WTC11 (cell line): ENCODE measurements at regions of chr10 and their contacts with region 1.

Region 1: GRCh38 chr10:70267161-70267933 is 16.5 kb downstream of the NPFFR1 start:
- DNase-seq: peak; percentile 79
- ATAC-seq: peak; percentile 56
- H3K4me3 Mint-ChIP-seq: no peak overlapping the region
- H3K27ac Mint-ChIP-seq: no peak overlapping the region
- H3K4me1 Mint-ChIP-seq: peaks cover 2% of the 10 kb centered on the region
- H3K27me3 Mint-ChIP-seq: peaks cover 9% of the 10 kb centered on the region
- CTCF ChIP-seq: peak; percentile 52

Region 2: GRCh38 chr10:70093335-70093944 is 173.9 kb before region 1 on chr10:
- CTCF ChIA-PET with region 1: no interaction called
- POLR2A ChIA-PET with region 1: no interaction called
- DNase-seq: no peak
- ATAC-seq: no peak
- H3K4me3 Mint-ChIP-seq: no peak overlapping the region
- H3K27ac Mint-ChIP-seq: no peak overlapping the region
- H3K4me1 Mint-ChIP-seq: no peaks in the 10 kb centered on the region
- H3K27me3 Mint-ChIP-seq: no peaks in the 10 kb centered on the region
- CTCF ChIP-seq: no peak

Region 3: DNA sequence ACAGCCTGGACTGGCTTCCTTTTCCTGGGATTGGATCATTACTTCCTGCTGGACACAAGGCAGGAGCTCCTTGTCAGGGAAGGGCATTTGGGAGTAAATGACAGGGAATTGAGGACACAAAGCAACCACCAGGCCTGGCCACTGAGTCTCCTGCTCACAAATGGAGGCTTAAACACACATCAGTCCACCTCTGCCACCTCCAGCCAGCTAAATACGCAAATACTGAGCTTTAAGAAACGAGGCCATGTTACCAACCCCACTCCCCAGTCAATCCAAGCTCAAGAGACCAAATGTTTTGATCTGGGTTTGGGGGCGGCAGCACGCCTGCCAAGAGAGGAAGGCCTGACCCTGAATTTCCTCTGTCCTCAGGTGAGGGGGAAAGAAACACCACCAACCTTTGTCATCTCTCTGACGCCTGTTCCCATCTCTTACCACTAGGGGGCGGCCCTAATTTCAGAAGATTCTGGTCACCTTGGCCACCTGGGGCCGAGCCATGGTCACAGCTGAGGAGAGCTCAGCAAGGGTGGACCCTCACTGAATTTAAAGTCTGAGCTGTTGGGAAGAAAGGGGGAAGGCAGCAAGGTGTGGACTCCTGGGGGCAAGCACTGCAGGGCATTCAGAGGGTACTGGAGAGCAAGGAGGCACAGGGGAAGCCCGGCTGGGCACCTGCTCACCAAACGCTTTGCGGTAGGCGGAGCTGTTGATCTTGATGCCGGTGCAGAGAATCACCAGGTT is 151.2 kb before region 1 on chr10:
- CTCF ChIA-PET with region 1: interaction called, 11 read pairs
- POLR2A ChIA-PET with region 1: no interaction called
- DNase-seq: peak; percentile 77
- ATAC-seq: peak; percentile 85
- H3K4me3 Mint-ChIP-seq: no peak overlapping the region
- H3K27ac Mint-ChIP-seq: 0 out of 2 replicates have a peak overlapping the region, but pooled peaks have one; percentile 30
- H3K4me1 Mint-ChIP-seq: peaks cover 10% of the 10 kb centered on the region; the same call in 1 of the 2 replicates
- H3K27me3 Mint-ChIP-seq: no peaks in the 10 kb centered on the region
- CTCF ChIP-seq: peak; percentile 92

Region 4: DNA sequence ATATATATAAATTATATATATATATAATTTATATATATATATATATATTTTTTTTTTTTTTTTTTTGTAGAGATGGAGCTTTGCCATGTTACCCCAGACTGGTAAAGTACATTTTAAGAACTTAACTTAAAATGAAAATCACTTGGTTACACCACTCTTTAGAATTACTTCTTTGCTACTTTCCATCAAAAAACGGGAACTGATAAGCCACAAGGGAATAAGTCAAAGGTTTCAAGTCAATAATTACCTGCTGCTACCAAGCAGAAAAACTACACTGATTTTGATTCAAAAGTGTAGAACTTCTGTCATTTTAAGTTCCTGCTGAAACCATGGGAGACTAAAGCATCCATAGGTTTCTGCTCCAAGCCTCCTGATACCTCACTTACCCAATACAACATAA is 46.3 kb before region 1 on chr10:
- CTCF ChIA-PET with region 1: interaction called, 58 read pairs
- POLR2A ChIA-PET with region 1: no interaction called
- DNase-seq: no peak
- ATAC-seq: no peak
- H3K4me3 Mint-ChIP-seq: no peak overlapping the region
- H3K27ac Mint-ChIP-seq: no peak overlapping the region
- H3K4me1 Mint-ChIP-seq: peaks cover 3% of the 10 kb centered on the region
- H3K27me3 Mint-ChIP-seq: no peaks in the 10 kb centered on the region
- CTCF ChIP-seq: no peak

Region 5: DNA sequence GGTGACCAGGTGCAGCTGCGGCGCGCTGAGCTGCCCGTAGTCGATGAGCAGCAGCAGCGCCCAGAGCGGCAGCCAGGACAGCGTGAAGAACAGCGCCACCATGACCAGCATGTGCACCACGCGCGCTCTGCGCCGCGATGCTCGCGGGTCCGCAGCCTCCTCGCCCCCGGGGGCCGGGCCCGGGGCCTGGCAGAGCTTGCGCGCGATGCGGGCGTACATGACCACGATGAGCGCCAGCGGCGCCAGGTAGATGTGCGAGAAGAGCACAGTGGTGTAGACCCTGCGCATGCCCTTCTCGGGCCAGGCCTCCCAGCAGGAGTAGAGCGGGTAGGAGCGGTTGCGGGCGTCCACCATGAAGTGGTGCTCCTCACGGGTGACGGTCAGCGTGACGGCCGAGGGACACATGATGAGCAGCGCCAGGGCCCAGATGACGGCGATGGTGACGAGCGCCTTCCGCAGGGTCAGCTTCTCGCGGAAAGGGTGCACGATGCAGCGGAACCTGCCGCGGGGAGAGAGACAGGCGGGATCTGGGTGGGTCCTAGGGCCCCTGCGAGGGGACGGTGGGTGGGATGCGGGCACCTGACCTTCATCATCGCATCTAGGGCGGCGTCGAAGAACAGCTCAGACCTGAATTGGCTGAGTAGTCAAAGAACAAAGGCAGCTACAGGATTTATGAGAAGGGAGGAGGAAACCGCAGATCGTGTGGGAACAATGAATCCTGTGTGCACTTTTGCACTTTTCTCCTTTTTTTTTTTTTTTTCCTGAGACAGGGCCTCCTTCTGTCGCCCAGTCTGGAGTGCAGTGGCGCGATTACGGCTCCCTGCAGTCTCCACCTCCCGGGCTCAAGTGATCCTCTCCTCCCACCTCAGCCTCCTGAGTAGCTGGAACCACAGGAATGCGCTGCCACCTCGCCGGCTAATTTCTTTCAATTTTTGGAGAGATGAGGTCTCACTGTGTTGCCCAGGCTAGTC is 11.7 kb before region 1 on chr10:
- CTCF ChIA-PET with region 1: interaction called, 19 read pairs
- POLR2A ChIA-PET with region 1: no interaction called
- DNase-seq: no peak
- ATAC-seq: no peak; the same call in 1 of the 2 replicates
- H3K4me3 Mint-ChIP-seq: no peak overlapping the region
- H3K27ac Mint-ChIP-seq: no peak overlapping the region
- H3K4me1 Mint-ChIP-seq: 0 out of 2 replicates have a peak, but pooled peaks cover 5% of the 10 kb centered on the region
- H3K27me3 Mint-ChIP-seq: peaks cover 6% of the 10 kb centered on the region; the same call in 1 of the 2 replicates
- CTCF ChIP-seq: no peak

Region 6: DNA sequence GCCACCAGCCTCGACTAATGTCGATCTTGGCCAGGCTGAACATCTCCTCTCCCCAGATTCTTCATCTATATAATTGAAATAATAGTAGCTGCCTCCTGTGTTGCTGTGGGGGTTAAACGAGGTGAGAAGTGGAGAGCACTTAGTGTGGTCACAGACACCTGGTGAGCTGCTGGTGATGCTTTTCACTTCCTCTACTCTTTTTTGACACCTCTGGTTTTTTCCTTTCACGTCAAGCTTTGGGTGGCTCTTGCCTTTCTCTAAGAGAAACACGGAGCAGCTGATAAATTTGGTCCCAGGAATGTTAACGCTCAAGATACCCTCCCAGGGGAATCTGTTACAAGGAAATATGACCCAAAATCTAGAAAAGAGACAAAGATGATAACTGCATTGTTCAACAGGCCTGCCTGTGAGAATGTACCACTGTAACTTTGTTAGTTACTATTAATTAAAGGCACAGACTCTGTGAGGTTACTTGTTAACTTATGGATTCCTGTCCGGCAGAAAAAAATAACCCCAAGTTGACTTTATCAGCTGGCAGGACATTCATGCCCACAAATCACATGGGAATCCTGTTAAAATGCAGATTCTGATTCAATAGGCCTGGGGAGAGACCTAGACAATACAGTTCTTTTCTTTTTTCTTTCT is 25.9 kb after region 1 on chr10:
- CTCF ChIA-PET with region 1: interaction called, 13 read pairs
- POLR2A ChIA-PET with region 1: no interaction called
- DNase-seq: no peak
- ATAC-seq: no peak
- H3K4me3 Mint-ChIP-seq: no peak overlapping the region
- H3K27ac Mint-ChIP-seq: no peak overlapping the region
- H3K4me1 Mint-ChIP-seq: peaks cover 8% of the 10 kb centered on the region
- H3K27me3 Mint-ChIP-seq: no peaks in the 10 kb centered on the region
- CTCF ChIP-seq: no peak

Region 7: DNA sequence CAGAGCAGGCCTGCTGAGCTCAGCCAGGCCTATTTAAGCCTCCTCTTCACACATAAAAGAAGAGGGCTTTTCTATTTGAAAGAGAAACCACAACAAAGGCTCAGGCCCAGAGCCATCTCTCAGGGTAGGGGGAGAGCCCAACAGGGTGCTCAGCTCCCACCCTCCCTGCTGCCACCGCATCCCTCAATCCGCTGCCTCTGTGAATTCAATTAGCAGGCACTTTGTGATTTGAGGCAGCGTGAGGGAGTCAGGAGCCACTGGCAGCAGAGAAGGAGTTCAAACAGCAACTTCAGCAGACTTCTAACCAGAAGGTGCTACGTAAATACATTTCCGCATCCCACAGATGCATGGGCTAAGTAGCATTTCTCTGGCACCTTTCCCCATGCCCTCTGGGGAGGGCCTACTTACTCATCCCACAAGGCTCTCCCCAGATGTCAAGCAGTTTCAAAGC is 69.9 kb after region 1 on chr10:
- CTCF ChIA-PET with region 1: interaction called, 11 read pairs
- POLR2A ChIA-PET with region 1: no interaction called
- DNase-seq: no peak
- ATAC-seq: peak; percentile 53
- H3K4me3 Mint-ChIP-seq: no peak overlapping the region
- H3K27ac Mint-ChIP-seq: no peak overlapping the region
- H3K4me1 Mint-ChIP-seq: peaks cover 12% of the 10 kb centered on the region
- H3K27me3 Mint-ChIP-seq: no peaks in the 10 kb centered on the region
- CTCF ChIP-seq: no peak

Region 8: GRCh38 chr10:70355051-70356021 is 88.0 kb after region 1 on chr10:
- CTCF ChIA-PET with region 1: interaction called, 38 read pairs
- POLR2A ChIA-PET with region 1: no interaction called
- DNase-seq: no peak
- ATAC-seq: no peak
- H3K4me3 Mint-ChIP-seq: no peak overlapping the region
- H3K27ac Mint-ChIP-seq: peak overlapping the region; percentile 71; the same call in 1 of the 2 replicates
- H3K4me1 Mint-ChIP-seq: peaks cover 11% of the 10 kb centered on the region
- H3K27me3 Mint-ChIP-seq: no peaks in the 10 kb centered on the region
- CTCF ChIP-seq: no peak